HCT116 (cell line): ENCODE measurements at regions of chr5 and their contacts with region 1.

Region 1: GRCh38 chr5:144880513-144880912 is 709.8 kb downstream of the KCTD16 start:
- DNase-seq: no peak
- ATAC-seq: no peak
- H3K4me3 ChIP-seq: no peak overlapping the region
- H3K27ac ChIP-seq: no peak overlapping the region
- H3K4me1 ChIP-seq: no peaks in the 10 kb centered on the region
- H3K27me3 ChIP-seq: no peaks in the 10 kb centered on the region
- CTCF ChIP-seq: no peak
- POLR2A ChIP-seq: no peak
- RAD21 ChIP-seq: no peak

Region 2: GRCh38 chr5:144335561-144335960 is 545.0 kb before region 1 on chr5:
- CTCF ChIA-PET with region 1: no interaction called
- POLR2A ChIA-PET with region 1: no interaction called
- RAD21 ChIA-PET with region 1: no interaction called
- intact Hi-C with region 1: loop called (anchors 5 kb)
- DNase-seq: no peak
- ATAC-seq: no peak
- H3K4me3 ChIP-seq: no peak overlapping the region
- H3K27ac ChIP-seq: no peak overlapping the region
- H3K4me1 ChIP-seq: no peaks in the 10 kb centered on the region
- H3K27me3 ChIP-seq: peaks cover 20% of the 10 kb centered on the region; the same call in 1 of the 2 replicates
- CTCF ChIP-seq: no peak
- POLR2A ChIP-seq: no peak
- RAD21 ChIP-seq: no peak

Region 3: GRCh38 chr5:145090115-145090514 is 209.6 kb after region 1 on chr5:
- CTCF ChIA-PET with region 1: no interaction called
- POLR2A ChIA-PET with region 1: no interaction called
- RAD21 ChIA-PET with region 1: no interaction called
- intact Hi-C with region 1: no loop called
- DNase-seq: no peak
- ATAC-seq: no peak
- H3K4me3 ChIP-seq: no peak overlapping the region
- H3K27ac ChIP-seq: no peak overlapping the region
- H3K4me1 ChIP-seq: no peaks in the 10 kb centered on the region
- H3K27me3 ChIP-seq: peaks cover 10% of the 10 kb centered on the region; the same call in 1 of the 2 replicates
- CTCF ChIP-seq: no peak
- POLR2A ChIP-seq: no peak
- RAD21 ChIP-seq: no peak

Region 4: GRCh38 chr5:145668714-145669113 is 788.2 kb after region 1 on chr5:
- CTCF ChIA-PET with region 1: no interaction called
- POLR2A ChIA-PET with region 1: no interaction called
- RAD21 ChIA-PET with region 1: no interaction called
- intact Hi-C with region 1: no loop called
- DNase-seq: no peak
- ATAC-seq: no peak
- H3K4me3 ChIP-seq: no peak overlapping the region
- H3K27ac ChIP-seq: no peak overlapping the region
- H3K4me1 ChIP-seq: peaks cover 0 to 7% of the 10 kb centered on the region in 2 experiments; a peak in 1 of 4 replicates
- H3K27me3 ChIP-seq: no peaks in the 10 kb centered on the region
- CTCF ChIP-seq: no peak
- POLR2A ChIP-seq: no peak
- RAD21 ChIP-seq: no peak

Region 5: GRCh38 chr5:145908205-145908945 is 1027.9 kb after region 1 on chr5:
- CTCF ChIA-PET with region 1: no interaction called
- POLR2A ChIA-PET with region 1: no interaction called
- RAD21 ChIA-PET with region 1: no interaction called
- intact Hi-C with region 1: no loop called
- DNase-seq: peak; percentile 18
- ATAC-seq: peak; percentile 76
- H3K4me3 ChIP-seq: no peak overlapping the region
- H3K27ac ChIP-seq: no peak overlapping the region
- H3K4me1 ChIP-seq: no peaks in the 10 kb centered on the region
- H3K27me3 ChIP-seq: no peaks in the 10 kb centered on the region
- CTCF ChIP-seq: peak; percentile 38 to 65 (median 50); a peak in 4 of 6 replicates
- POLR2A ChIP-seq: no peak
- RAD21 ChIP-seq: peak; percentile 68